ENCODE measurements at regions of chr15 and their contacts with region 1.

Region 1: DNA sequence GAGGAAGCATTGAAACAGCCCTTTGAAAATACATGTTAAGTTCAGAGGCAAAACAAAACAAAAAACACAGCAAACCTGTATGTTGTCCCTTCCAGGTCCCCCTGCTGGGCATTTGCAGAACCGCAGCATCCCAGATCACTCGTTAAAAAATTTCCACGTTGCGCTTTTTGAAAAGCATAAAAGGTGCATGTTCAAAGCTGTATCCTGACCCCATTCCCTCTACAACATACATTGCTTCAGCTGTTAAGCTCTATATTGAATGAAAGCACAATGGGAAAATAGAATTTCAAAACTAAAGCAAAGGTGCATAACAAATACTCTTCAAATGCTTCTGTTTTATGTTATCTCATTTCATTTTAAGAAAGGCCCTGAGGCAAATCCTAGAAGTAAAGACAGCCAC is 328.3 kb downstream of the THSD4 start:
- DNase-seq: peak; percentile 72
- ATAC-seq: peak; percentile 39; the same call in 1 of the 2 replicates
- H3K4me3 Mint-ChIP-seq: no peak overlapping the region
- H3K27ac Mint-ChIP-seq: peak overlapping the region; percentile 18; the same call in 1 of the 2 replicates
- H3K4me1 Mint-ChIP-seq: peaks cover 19% of the 10 kb centered on the region
- H3K27me3 Mint-ChIP-seq: no peaks in the 10 kb centered on the region
- CTCF ChIP-seq: peak; percentile 80

Region 2: GRCh38 chr15:71114896-71115554 is 328.5 kb before region 1 on chr15 and contains the start of gene THSD4:
- CTCF ChIA-PET with region 1: interaction called, 10 read pairs
- POLR2A ChIA-PET with region 1: no interaction called
- DNase-seq: peak; percentile 91
- ATAC-seq: peak; percentile 76
- H3K4me3 Mint-ChIP-seq: peak within 1 kb of the TSS; percentile 86
- H3K27ac Mint-ChIP-seq: peak within 1 kb of the TSS; percentile 84; the same call in 1 of the 2 replicates
- H3K4me1 Mint-ChIP-seq: peaks cover 61% of the 10 kb centered on the region
- H3K27me3 Mint-ChIP-seq: peaks cover 34% of the 10 kb centered on the region
- CTCF ChIP-seq: peak; percentile 96
- total RNA-seq, gene THSD4: 7.8 to 11.7 TPM (median 8.2 TPM) in 3 replicates

Region 3: DNA sequence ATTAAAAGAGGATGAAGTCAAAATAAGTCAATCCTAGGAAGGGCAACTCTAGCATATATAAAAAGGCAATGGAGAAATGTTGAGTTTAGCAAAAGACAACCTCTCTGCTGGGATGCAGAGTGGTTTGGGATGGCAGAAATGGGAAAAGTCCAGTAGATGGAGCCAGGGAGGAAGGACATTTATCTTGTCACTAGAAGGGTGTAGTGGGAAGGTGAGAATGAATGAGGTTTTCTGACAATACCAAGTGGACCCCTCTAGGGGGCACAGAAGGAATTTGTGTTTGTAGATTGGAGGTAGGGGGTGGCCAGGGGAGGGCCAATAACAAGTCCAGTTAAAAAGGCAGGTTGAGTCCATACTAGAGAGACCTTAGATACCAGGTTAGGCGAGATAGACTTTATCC is 248.3 kb before region 1 on chr15:
- CTCF ChIA-PET with region 1: interaction called, 11 read pairs
- POLR2A ChIA-PET with region 1: no interaction called
- DNase-seq: no peak
- ATAC-seq: peak; percentile 95
- H3K4me3 Mint-ChIP-seq: no peak overlapping the region
- H3K27ac Mint-ChIP-seq: no peak overlapping the region
- H3K4me1 Mint-ChIP-seq: peaks cover 6% of the 10 kb centered on the region
- H3K27me3 Mint-ChIP-seq: no peaks in the 10 kb centered on the region
- CTCF ChIP-seq: peak; percentile 21; the same call in 1 of the 2 replicates

Region 4: GRCh38 chr15:71414823-71415222 is 28.7 kb before region 1 on chr15:
- CTCF ChIA-PET with region 1: no interaction called
- POLR2A ChIA-PET with region 1: no interaction called
- DNase-seq: no peak
- ATAC-seq: no peak
- H3K4me3 Mint-ChIP-seq: no peak overlapping the region
- H3K27ac Mint-ChIP-seq: no peak overlapping the region
- H3K4me1 Mint-ChIP-seq: peaks cover 13% of the 10 kb centered on the region
- H3K27me3 Mint-ChIP-seq: no peaks in the 10 kb centered on the region
- CTCF ChIP-seq: no peak